ENCODE measurements at regions of chr20 and their contacts with region 1.

Region 1: DNA sequence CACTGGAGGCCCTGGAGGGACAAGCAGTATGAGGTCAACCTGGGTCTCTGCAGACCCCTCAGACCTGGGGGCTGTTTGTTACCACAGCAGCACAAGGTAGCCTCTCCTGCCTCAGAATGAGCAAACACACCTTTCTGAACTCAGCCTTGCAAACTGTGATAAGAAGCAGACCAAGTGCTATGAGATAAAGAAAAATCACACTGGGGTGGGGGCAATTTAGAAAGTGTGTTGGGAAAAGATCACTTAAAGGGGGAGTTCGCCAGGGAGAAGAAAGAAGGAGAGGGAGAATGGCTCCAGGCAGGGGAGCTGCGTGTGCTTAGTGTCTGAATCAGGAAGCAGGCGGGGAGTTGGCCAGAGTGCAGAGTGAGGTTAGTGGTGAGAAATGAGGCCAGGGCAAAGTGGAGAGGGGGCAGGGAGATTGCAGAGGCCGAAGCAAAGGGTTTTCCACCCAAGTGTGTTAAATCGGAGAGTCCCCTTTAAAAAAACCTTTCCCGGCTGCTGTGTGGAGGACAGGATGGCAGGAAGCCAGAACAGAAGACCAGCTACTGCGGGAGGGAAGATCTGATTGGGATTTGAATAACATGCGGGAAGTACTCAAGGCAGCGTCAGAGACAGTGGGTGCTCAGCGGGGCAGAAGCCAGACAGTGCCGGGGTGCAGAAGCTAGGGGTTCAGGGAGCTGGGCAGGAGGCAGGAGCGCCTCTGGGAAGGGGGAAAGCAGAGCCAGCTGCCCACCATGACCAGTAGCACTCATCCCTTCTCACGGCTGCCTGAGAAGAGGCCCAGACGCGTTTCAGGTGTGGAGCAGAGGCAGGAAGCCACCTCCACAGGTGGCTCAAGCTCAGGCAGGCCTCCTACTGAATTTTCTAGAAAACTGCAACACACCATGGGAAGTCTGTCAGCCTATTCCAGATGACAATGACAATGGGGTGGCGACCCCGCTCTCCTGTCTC is 9.0 kb downstream of the ADA start:
- DNase-seq: peak in 7 of 14 experiments; percentile 18 to 67 (median 48)
- ATAC-seq: peak; percentile 33
- H3K4me3 ChIP-seq: peak overlapping the region; percentile 21
- H3K4me3 Mint-ChIP-seq: peak overlapping the region; percentile 47
- H3K27ac ChIP-seq: peak overlapping the region; percentile 81 to 90
- H3K27ac Mint-ChIP-seq: peak overlapping the region; percentile 91
- H3K4me1 ChIP-seq: peaks cover 69% of the 10 kb centered on the region
- H3K4me1 Mint-ChIP-seq: peaks cover 75% of the 10 kb centered on the region
- H3K27me3 ChIP-seq: no peaks in the 10 kb centered on the region
- H3K27me3 Mint-ChIP-seq: no peaks in the 10 kb centered on the region
- CTCF ChIP-seq: peak; percentile 36

Region 2: GRCh38 chr20:44622501-44623270 is 19.8 kb before region 1 on chr20:
- CTCF ChIA-PET with region 1: no interaction called
- POLR2A ChIA-PET with region 1: interaction called, 5 read pairs
- intact Hi-C with region 1: loop called in 1 of 2 experiments (anchors 2 kb)
- DNase-seq: no peak
- ATAC-seq: no peak
- H3K4me3 ChIP-seq: no peak overlapping the region
- H3K4me3 Mint-ChIP-seq: no peak overlapping the region
- H3K27ac ChIP-seq: no peak overlapping the region
- H3K27ac Mint-ChIP-seq: no peak overlapping the region
- H3K4me1 ChIP-seq: peaks cover 22% of the 10 kb centered on the region
- H3K4me1 Mint-ChIP-seq: peaks cover 33% of the 10 kb centered on the region
- H3K27me3 ChIP-seq: no peaks in the 10 kb centered on the region
- H3K27me3 Mint-ChIP-seq: no peaks in the 10 kb centered on the region
- CTCF ChIP-seq: no peak

Region 3: DNA sequence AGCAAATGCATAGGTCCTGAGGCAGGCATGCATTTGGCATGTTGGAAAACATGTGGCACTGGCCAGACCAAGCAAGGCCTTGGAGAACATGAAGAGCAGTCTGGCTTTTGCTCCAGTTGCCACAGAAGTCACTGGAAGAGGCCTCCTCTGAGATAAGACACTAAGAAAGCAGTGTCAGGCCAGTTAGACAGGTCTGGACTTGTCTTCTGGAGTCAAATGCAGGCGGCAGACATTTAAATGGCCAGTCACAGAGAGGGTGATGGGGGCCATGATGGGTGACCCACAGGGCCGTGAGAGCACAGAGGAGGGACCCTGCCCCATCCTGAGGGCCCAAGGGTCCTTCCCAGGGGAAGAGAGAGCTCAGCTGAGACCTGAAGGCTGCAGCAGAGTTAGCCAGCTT is 35.8 kb after region 1 on chr20:
- CTCF ChIA-PET with region 1: interaction called, 21 read pairs
- POLR2A ChIA-PET with region 1: interaction called, 15 read pairs
- intact Hi-C with region 1: loop called in 1 of 2 experiments (anchors 5 kb)
- DNase-seq: no peak
- ATAC-seq: no peak
- H3K4me3 ChIP-seq: no peak overlapping the region
- H3K4me3 Mint-ChIP-seq: no peak overlapping the region
- H3K27ac ChIP-seq: no peak overlapping the region
- H3K27ac Mint-ChIP-seq: no peak overlapping the region
- H3K4me1 ChIP-seq: no peaks in the 10 kb centered on the region
- H3K4me1 Mint-ChIP-seq: no peaks in the 10 kb centered on the region
- H3K27me3 ChIP-seq: no peaks in the 10 kb centered on the region
- H3K27me3 Mint-ChIP-seq: no peaks in the 10 kb centered on the region
- CTCF ChIP-seq: no peak

Region 4: GRCh38 chr20:44714696-44715482 is 72.4 kb after region 1 on chr20 and contains the start of gene CCN5:
- CTCF ChIA-PET with region 1: no interaction called
- POLR2A ChIA-PET with region 1: no interaction called
- intact Hi-C with region 1: no loop called
- DNase-seq: no peak
- ATAC-seq: no peak
- H3K4me3 ChIP-seq: no peak within 1 kb of the TSS
- H3K4me3 Mint-ChIP-seq: no peak within 1 kb of the TSS
- H3K27ac ChIP-seq: no peak within 1 kb of the TSS
- H3K27ac Mint-ChIP-seq: no peak within 1 kb of the TSS
- H3K4me1 ChIP-seq: peaks cover 6% of the 10 kb centered on the region
- H3K4me1 Mint-ChIP-seq: no peaks in the 10 kb centered on the region
- H3K27me3 ChIP-seq: no peaks in the 10 kb centered on the region
- H3K27me3 Mint-ChIP-seq: no peaks in the 10 kb centered on the region
- CTCF ChIP-seq: no peak
- total RNA-seq, gene CCN5: not detected